ENCODE measurements at regions of chr5 and their contacts with region 1.

Region 1: DNA sequence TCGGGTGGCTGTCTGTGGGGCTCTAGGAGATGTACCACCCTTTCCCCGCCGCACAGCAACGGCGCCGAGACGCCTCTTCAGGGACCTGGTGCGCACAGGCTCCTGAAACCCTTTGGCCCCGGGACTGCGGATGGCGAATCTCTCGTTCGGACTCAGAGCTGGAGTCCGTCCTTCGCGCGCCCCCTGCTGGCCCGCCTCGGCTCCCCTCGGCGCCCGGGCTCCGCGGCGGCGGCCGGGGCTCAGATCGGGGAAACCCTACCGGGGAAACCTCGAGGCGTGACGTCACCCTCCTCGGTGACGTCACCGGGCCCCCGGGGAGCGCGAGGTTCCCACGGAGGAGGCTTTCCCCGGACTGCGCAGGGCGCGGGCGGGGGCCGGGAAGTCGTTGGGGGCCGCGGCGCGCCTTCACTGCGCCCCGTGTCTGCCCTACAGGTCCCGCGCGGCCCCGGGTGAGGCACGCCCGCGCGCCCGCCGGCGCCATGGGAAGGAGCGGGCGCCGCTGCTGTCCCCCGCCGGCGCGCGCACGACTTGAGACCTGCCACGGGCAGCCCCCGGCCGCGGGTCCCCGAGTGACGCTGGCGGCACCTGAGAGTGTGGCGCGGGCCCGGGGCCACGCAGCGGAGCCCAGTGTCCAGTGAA is 7.9 kb downstream of the PRR7 start:
- DNase-seq: peak; percentile 90
- H3K4me3 Mint-ChIP-seq: peak overlapping the region; percentile 68
- H3K27ac Mint-ChIP-seq: peak overlapping the region; percentile 68
- H3K4me1 Mint-ChIP-seq: peaks cover 28% of the 10 kb centered on the region
- H3K27me3 Mint-ChIP-seq: peaks cover 11% of the 10 kb centered on the region

Region 2: GRCh38 chr5:177311723-177312648 is 142.5 kb before region 1 on chr5 and contains the start of gene MXD3:
- CTCF ChIA-PET with region 1: interaction called, 18 read pairs
- POLR2A ChIA-PET with region 1: no interaction called
- DNase-seq: peak; percentile 99
- H3K4me3 Mint-ChIP-seq: peak within 1 kb of the TSS; percentile 97
- H3K27ac Mint-ChIP-seq: peak within 1 kb of the TSS; percentile 96
- H3K4me1 Mint-ChIP-seq: peaks cover 55% of the 10 kb centered on the region
- H3K27me3 Mint-ChIP-seq: no peaks in the 10 kb centered on the region
- total RNA-seq, gene MXD3: 107 to 109 TPM

Region 3: DNA sequence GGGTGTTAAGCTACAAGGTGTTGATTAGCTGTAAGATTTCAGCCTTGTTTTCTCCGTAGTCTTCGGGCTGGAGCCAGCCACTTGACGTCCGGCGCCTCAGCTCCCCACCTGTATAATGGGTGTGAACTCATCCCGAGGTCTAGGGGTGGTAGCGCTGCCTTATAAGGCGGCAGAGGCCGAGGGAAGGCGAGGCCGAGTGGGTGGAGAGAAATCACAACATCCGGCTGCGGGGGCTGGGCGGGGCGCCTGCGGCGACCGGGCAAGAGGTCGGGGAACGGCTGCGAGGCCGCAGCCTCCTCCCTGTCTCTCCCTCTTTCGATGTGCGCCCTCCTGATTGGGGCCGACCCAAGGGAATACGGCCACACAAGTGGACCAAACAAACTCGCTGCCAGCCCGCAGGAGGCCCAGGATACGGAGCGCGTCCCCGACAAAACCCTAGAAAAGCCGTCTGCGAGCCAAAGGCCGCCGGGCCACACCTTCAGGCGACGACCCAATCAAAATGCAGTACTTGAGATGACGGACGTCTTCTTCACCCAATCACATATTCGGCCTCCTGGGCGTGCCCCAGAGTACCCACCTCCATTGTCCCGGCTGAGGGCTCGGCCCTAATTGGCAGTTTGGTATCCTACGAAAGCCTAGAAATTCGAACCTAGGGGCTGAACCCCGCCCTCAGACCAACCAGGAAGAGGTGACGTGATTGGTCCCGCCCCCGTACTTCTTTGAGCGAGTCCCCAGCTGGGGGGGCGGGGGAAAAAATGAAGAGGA is 28.5 kb before region 1 on chr5:
- CTCF ChIA-PET with region 1: interaction called, 1,643 read pairs
- POLR2A ChIA-PET with region 1: no interaction called
- DNase-seq: peak; percentile 100
- H3K4me3 Mint-ChIP-seq: peak overlapping the region; percentile 97
- H3K27ac Mint-ChIP-seq: peak overlapping the region; percentile 93
- H3K4me1 Mint-ChIP-seq: peaks cover 48% of the 10 kb centered on the region
- H3K27me3 Mint-ChIP-seq: no peaks in the 10 kb centered on the region

Region 4: DNA sequence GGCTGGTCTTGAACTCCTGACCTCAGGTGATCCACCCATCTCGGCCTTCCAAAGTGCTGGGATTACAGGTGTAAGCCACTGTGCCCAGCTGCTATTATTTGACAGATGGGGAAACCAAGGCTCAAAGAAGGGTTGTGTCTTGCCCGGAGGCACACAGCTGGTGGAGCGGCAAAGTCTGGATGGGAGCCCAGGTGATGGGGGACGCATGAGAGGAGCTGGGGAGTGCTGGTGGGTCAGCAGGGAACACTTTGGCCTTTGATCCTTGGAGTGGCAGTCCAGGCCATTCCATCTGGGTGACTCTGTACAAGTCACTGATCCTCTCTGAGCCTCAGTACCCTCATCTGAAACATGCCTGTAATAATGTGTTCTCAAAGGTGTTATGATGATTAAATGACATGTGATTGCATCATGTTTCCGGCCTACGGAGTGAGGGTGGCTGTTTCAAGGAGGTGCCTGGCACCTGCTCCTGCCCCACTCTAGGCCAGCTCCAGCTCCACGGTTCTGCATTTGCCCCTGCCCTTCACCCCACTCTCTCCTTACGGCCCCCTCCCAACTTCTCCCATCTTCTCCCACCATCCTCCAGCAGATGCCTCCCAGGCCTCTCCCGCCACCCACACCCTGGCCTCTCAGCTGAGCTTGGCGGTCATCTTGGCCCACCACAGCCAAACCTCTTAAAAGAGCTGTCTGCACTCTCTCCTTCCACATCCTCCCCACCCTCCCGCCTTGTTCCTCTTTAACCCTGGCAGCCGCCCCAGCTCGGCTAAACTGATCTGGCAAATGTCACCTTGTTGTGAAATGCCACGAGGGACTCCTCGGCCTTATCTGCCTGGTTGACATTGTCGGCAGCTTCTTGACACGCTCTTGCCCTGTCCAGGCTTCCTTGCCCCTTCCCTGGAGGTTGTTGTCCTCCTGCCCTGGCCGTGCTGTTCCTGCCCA is 24.5 kb after region 1 on chr5:
- CTCF ChIA-PET with region 1: interaction called, 13 read pairs
- POLR2A ChIA-PET with region 1: no interaction called
- DNase-seq: peak; percentile 42
- H3K4me3 Mint-ChIP-seq: no peak overlapping the region
- H3K27ac Mint-ChIP-seq: peak overlapping the region; percentile 91
- H3K4me1 Mint-ChIP-seq: peaks cover 49% of the 10 kb centered on the region
- H3K27me3 Mint-ChIP-seq: peaks cover 11% of the 10 kb centered on the region

Region 5: GRCh38 chr5:177500685-177501522 is 46.4 kb after region 1 on chr5:
- CTCF ChIA-PET with region 1: interaction called, 10 read pairs
- POLR2A ChIA-PET with region 1: no interaction called
- DNase-seq: peak; percentile 83
- H3K4me3 Mint-ChIP-seq: no peak overlapping the region
- H3K27ac Mint-ChIP-seq: no peak overlapping the region
- H3K4me1 Mint-ChIP-seq: peaks cover 22% of the 10 kb centered on the region
- H3K27me3 Mint-ChIP-seq: peaks cover 18% of the 10 kb centered on the region

Region 6: DNA sequence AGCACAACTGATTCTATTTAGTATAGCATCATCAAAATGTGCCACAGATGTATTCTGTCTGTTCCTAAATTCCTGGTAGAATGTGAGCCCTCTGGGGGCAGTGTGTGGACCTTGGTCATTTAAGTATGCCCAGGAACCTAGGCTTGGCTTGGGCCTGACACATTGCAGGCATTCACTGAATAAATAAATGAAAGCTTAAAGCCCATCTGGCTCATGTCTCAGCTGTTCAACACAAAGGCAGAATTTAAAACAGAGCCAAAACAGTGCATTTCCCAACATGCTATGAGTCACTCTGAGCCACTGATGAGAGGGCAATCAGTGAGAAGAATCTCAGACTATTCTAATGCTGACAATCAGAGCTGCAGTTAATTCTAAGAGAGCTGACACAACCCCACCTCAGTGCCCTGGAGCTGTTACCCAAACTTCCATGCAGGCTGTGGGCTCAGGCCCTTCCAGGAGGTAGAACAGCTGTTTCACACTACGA is 91.8 kb after region 1 on chr5:
- CTCF ChIA-PET with region 1: no interaction called
- POLR2A ChIA-PET with region 1: no interaction called
- DNase-seq: no peak
- H3K4me3 Mint-ChIP-seq: no peak overlapping the region
- H3K27ac Mint-ChIP-seq: no peak overlapping the region
- H3K4me1 Mint-ChIP-seq: peaks cover 7% of the 10 kb centered on the region
- H3K27me3 Mint-ChIP-seq: no peaks in the 10 kb centered on the region

Measured in activated CD4-positive, alpha-beta T cell treated with anti-CD3 and anti-CD28 coated beads, Interleukin-2, amount 10 ng/mL, durations not matched to agents 7 days and 5 days (primary cell).